Lower lobe of right lung (tissue), 2 donors: ENCODE measurements at regions of chr10 and their contacts with region 1.

Region 1: GRCh38 chr10:28663576-28664313 is 13.6 kb upstream of the BAMBI start:
- DNase-seq: peak; percentile 76
- ATAC-seq: peak; percentile 90 to 91
- H3K4me3 ChIP-seq: no peak overlapping the region
- H3K27ac ChIP-seq: no peak overlapping the region
- H3K4me1 ChIP-seq: no peaks in the 10 kb centered on the region
- H3K27me3 ChIP-seq: peaks cover 23% of the 10 kb centered on the region
- CTCF ChIP-seq: peak; percentile 98

Region 2: DNA sequence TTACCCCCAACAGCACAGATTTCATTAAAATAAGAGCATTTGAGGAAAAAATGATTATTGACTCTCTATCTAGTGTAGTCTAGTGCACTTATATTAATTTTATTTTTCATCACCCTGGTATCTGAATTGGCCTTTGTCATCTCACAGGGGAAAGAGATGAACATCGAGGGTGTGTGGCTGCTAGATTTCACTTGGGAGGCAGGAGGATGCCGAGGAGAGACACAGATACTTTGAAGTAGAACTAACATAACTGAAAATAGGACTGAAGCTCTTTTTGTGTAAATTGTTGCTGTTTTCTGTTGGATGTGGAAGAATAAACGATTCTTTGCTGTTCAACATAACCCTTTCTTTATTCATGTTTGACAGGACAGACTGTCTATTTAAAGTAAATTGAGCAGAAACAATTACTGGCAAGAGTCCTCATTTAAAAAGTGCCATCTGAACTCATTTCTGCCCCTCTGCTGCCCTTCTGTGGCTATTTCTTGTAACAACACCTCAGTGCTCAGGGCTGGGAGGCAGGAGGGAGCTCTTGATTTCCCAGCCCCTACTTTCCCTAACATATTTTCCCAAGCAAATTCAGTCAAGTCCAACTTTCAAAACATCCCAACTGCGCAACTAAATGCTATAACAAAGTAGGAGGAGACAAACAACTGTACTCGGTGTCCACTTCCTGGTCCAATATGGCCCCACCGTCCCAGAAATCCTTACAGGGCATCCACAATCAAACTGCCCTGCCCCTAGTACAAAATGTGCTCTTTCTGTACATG is 640.7 kb after region 1 on chr10:
- intact Hi-C with region 1: loop called (anchors 10 kb)
- DNase-seq: no peak
- ATAC-seq: peak; percentile 70 to 77
- H3K4me3 ChIP-seq: no peak overlapping the region
- H3K27ac ChIP-seq: no peak overlapping the region
- H3K4me1 ChIP-seq: peaks cover 5% of the 10 kb centered on the region
- H3K27me3 ChIP-seq: no peaks in the 10 kb centered on the region
- CTCF ChIP-seq: peak; percentile 76